Sciatic nerve (tissue), 2 donors: ENCODE measurements at regions of chr9 and their contacts with region 1.

Region 1: GRCh38 chr9:105425841-105426436 is 21.9 kb upstream of the FSD1L start:
- DNase-seq: no peak
- ATAC-seq: no peak

Region 2: DNA sequence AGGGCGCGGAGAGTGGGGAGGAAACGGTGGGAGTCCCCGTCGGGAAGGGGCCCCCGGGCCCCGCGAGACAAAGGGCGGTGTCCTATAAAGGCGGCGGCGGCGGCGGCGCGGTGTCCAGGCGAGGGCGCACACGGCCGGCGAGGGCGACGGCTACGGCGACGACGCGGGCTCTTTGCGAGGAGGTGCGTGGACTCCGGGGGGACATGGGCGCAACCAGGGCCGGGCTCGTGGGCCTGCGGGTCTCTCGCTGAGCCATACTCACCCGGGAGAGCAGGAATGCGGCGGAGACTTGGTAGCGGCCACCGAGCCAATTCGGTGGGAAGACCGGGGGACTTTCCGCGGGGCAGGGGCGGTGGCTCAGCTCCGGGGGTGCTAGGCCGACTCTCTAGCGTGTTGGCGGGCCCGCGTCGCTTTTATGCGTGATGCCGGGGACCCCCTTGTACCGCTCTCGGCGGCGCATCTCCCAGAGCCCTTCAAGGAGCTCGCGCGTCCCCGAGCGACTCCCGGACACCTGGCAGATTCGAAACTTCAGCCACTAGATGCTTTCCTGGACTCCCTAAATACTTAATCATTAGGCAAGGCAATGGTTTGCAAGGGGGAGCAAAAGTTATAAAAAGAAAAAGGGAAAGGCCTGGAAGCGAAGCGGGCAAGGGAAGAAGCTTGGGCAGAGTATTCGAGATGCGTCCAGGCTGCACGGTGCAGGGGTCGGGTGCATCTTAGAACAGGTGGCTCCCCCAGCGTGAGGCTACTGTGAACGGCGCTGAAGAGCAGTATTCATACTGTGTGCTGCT is 230.4 kb after region 1 on chr9:
- intact Hi-C with region 1: no loop called
- DNase-seq: no peak
- ATAC-seq: peak; percentile 62

Region 3: GRCh38 chr9:106929471-106930177 is 1503.7 kb after region 1 on chr9:
- intact Hi-C with region 1: loop called (anchors 10 kb)
- DNase-seq: no peak
- ATAC-seq: peak; percentile 57